ENCODE measurements at regions of chr15 and their contacts with region 1.

Region 1: GRCh38 chr15:50675536-50676144 is 11.0 kb downstream of the TRPM7 start:
- DNase-seq: no peak
- H3K4me3 ChIP-seq: no peak overlapping the region
- H3K27ac ChIP-seq: no peak overlapping the region
- H3K4me1 ChIP-seq: no peaks in the 10 kb centered on the region
- H3K27me3 ChIP-seq: no peaks in the 10 kb centered on the region
- CTCF ChIP-seq: peak; percentile 55 to 83 (median 76)

Region 2: DNA sequence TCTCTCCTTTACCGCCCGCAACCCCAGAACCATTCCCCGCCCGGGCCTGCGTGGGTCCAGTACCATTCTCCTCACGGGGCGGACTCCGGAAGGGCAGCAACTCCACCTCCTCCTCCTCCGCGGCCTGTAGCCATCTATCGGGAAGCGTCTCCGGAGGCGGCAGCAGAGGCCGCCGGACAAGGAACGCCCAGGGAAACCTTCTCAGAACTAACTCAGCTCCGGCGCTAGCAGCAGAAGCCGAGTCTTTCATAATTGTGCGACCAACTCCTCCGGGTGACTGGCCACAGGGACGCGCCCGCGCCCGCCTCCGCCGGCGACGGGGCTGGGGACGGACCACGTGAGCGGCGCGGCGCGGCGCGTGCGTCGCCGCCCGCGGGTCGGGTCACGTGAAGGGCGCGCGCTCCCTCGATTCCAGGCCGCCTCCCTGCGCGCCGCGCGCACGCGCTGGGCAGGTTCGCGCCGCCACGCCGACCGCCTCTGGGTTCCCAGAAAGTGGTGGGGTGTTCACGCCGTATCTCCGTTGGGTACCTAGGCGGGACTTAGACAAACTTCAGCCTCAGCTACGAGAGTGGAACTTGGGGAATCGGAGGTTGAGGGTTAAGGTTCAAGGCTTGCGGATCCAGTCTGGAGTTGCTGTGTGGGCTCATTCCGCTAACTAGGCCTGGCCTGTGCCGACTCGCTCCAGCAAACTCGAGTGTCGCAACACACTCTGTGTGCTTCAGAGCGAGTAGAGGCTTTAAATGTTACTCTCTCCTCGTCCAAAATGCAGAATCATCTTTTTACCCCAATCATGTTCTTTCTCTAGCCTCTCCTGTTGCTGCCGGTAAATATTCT is 11.0 kb after region 1 on chr15 and contains the start of gene TRPM7:
- intact Hi-C with region 1: loop called (anchors 1 kb)
- DNase-seq: peak; percentile 24 to 92
- H3K4me3 ChIP-seq: peak within 1 kb of the TSS; percentile 71 to 80
- H3K27ac ChIP-seq: peak within 1 kb of the TSS; percentile 91 to 96
- H3K4me1 ChIP-seq: peaks cover 0 to 21% of the 10 kb centered on the region in 2 donors
- H3K27me3 ChIP-seq: no peaks in the 10 kb centered on the region
- CTCF ChIP-seq: no peak
- total RNA-seq, gene TRPM7: 24.1 TPM

Region 3: GRCh38 chr15:50876989-50877360 is 201.3 kb after region 1 on chr15:
- intact Hi-C with region 1: loop called (anchors 1 kb)
- DNase-seq: peak; percentile 20 to 92
- H3K4me3 ChIP-seq: peak overlapping the region; percentile 41 to 55
- H3K27ac ChIP-seq: no peak overlapping the region
- H3K4me1 ChIP-seq: no peaks in the 10 kb centered on the region
- H3K27me3 ChIP-seq: no peaks in the 10 kb centered on the region
- CTCF ChIP-seq: peak; percentile 81 to 99 (median 98)